K562 (cell line): ENCODE measurements at regions of chr3 and their contacts with region 1.

Region 1: GRCh38 chr3:128503164-128503651 is 10.2 kb upstream of the GATA2 start:
- DNase-seq: peak in 1 of 4 experiments; percentile 47
- ATAC-seq: peak; percentile 32; the same call in 2 of the 3 replicates
- H3K4me3 ChIP-seq: no peak overlapping the region
- H3K27ac ChIP-seq: no peak overlapping the region
- H3K4me1 ChIP-seq: peaks cover 15 to 27% of the 10 kb centered on the region in 2 experiments; a peak in 4 of 5 replicates
- H3K27me3 ChIP-seq: no peaks in the 10 kb centered on the region
- CTCF ChIP-seq: peak in 2 of 3 experiments; percentile 32 to 34; a peak in 3 of 6 replicates
- EP300 ChIP-seq: no peak
- POLR2A ChIP-seq: 0 out of 2 replicates have a peak, but pooled peaks have one; percentile 18
- RAD21 ChIP-seq: peak in 1 of 2 experiments; percentile 50; a peak in 2 of 4 replicates

Region 2: DNA sequence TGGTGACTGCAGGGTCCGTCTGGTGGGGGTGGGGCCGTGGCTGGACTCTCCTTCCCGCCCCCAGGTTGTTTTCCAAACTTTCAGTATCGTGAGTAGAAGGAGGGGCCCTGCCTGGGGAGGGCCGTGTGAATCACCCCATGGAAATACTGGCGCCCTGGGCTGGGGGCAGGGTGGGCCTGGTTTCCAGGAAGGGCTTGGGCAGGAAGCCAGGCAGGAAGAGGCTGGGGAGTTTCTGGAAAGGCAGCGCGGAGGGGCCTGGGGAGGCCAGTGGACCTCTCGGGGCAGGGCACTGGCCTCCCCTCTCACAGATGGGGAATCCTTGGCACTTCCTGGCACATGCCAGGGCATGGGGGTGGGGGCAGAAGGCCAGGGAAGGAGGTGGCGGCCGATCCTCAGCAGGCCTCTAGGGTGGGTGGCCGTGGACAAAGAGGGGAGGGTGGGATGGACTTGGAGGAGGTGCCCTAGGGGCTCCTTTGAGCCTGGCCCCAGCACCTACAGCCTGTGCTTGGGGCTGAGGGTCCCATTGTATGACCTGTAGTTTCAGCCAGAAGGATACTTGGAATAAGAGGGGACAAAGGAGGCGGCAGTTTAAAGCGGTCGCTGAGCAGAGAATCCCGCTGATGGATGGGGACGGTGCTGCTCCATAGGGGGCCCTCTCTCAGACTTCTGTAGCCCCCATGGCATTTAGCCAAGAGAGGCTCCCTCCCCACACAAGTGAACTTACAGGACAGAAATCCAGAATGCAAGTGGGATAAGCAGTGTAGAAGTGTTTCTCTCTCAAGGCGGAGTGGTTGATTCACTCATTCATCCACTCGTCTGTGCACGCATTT is 46.3 kb after region 1 on chr3:
- CTCF ChIA-PET with region 1: no interaction called
- POLR2A ChIA-PET with region 1: interaction called, 4 read pairs
- in situ Hi-C with region 1: no loop called
- intact Hi-C with region 1: loop called (anchors 5 kb)
- DNase-seq: peak; percentile 75 to 91 (median 81)
- ATAC-seq: peak; percentile 71
- H3K4me3 ChIP-seq: peak overlapping the region; percentile 21
- H3K27ac ChIP-seq: peak overlapping the region; percentile 80
- H3K4me1 ChIP-seq: peaks cover 52 to 55% of the 10 kb centered on the region in 2 experiments
- H3K27me3 ChIP-seq: no peaks in the 10 kb centered on the region
- CTCF ChIP-seq: no peak
- EP300 ChIP-seq: peak; percentile 66; the same call in 1 of the 2 replicates
- POLR2A ChIP-seq: no peak
- RAD21 ChIP-seq: no peak